ENCODE measurements at regions of chr15 and their contacts with region 1.

Region 1: DNA sequence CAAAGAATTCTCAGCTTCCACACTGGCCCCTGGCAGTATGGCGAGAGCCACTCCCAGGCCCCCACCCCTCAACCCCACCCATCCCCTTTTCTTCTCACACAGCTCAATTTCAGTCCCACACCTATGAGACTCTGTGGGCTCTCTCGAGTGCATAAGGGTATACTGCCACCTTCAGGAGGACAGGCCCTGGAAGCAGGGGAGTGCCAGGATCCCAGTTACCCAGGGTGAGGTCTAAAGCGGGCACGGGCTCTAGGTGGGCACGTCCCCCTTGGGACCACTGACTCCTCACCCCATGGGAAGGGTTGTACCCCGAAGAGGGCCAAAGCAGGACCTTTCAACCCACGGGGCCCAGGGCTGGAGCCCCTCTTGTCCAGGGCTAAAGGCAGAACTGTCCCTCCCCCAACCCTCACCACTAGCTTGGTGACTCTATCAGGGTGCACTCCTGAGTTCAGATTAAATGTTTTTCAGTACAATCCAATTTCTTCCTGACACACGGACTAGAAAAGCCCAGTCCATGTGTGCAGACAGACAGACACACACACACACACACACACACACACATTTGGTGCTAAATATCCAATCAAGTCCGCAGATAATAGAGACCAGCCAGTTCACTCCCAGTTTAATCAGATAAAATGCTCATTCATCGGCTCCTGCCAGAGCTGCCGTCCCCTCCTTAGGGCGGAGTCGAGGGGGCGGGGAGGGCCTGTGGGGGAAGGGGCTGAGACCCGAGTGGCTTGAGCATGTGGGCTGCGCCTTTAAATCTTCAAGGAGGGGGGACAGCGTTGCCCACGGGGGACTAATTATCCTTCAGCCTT is 59.4 kb downstream of the CYP11A1 start:
- DNase-seq: no peak
- ATAC-seq: peak; percentile 88
- H3K4me3 ChIP-seq: no peak overlapping the region
- H3K27ac ChIP-seq: no peak overlapping the region
- H3K4me1 ChIP-seq: no peaks in the 10 kb centered on the region; the same call in 1 of the 2 replicates
- H3K27me3 ChIP-seq: no peaks in the 10 kb centered on the region
- CTCF ChIP-seq: peak; percentile 90

Region 2: DNA sequence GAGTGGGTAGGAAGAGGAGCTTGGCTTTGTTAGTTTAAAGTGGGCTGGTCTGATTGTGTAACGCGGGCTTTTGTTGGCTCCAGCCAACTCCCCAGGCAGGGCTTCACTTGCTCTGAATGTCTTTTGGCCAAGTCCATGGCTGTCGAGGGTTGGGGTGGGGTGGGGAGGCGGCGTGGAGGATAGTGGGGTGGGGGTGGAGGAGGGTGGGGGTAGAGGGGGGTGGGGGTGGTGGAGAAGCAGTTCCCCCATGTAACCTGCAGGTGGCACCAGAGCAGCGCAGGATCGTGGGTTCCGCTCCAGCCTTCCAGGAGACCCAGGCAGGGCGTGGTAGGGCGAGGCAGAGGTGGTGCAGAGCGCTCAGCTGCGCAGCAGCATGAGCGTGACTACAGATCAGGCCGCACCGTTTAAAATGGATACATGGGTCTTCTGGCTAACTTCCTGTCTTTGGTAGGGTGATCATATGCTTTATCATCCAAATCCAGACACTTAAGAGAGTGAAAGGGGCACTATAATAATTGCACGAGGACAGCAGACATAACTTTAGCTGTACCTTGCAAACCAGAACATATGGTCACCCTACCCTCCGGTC is 254.0 kb before region 1 on chr15:
- CTCF ChIA-PET with region 1: interaction called, 22 read pairs
- POLR2A ChIA-PET with region 1: no interaction called
- in situ Hi-C with region 1: no loop called
- intact Hi-C with region 1: loop called (anchors 2 kb)
- DNase-seq: no peak
- ATAC-seq: peak; percentile 96
- H3K4me3 ChIP-seq: peak overlapping the region; percentile 7 to 31; a peak in 2 of 4 replicates
- H3K27ac ChIP-seq: no peak overlapping the region
- H3K4me1 ChIP-seq: no peaks in the 10 kb centered on the region
- H3K27me3 ChIP-seq: peaks cover 2% of the 10 kb centered on the region; the same call in 1 of the 2 replicates
- CTCF ChIP-seq: peak; percentile 88

Measured in Panc1 (cell line).